Heart right ventricle (tissue), 16 donors: ENCODE measurements at regions of chr11 and their contacts with region 1.

Region 1: DNA sequence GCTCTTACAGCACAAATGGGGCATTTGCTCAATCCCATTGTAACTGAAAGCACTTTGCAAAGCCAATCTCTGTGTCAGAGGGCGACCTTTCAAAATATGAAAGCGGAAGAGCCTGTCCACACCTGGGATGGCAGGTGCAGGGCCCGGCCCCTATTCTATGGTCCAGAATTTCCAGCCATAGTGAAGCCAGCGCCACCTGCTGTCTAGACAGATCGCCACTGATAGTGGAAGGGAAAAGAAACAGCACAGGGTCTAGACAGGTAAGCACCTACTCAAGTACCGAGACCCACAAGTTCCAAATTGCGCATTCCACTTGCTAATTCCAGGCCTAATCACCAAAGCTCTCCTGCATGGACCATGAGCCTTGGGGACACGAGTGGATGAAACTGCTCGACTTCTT is 141.4 kb downstream of the NTM start:
- DNase-seq: no peak
- ATAC-seq: no peak
- H3K4me3 ChIP-seq: no peak overlapping the region
- H3K27ac ChIP-seq: no peak overlapping the region
- H3K4me1 ChIP-seq: no peaks in the 10 kb centered on the region
- H3K27me3 ChIP-seq: peaks cover 0 to 6% (median 0%) of the 10 kb centered on the region in 7 donors
- CTCF ChIP-seq: peak in 8 of 9 donors; percentile 10 to 57 (median 46)

Region 2: GRCh38 chr11:131246663-131247062 is 265.1 kb before region 1 on chr11:
- intact Hi-C with region 1: loop called in 8 of 10 experiments (anchors 5 to 10 kb)
- DNase-seq: peak; percentile 8 to 41
- ATAC-seq: peak in 7 of 8 donors; percentile 28 to 86 (median 56)
- H3K4me3 ChIP-seq: no peak overlapping the region
- H3K27ac ChIP-seq: no peak overlapping the region
- H3K4me1 ChIP-seq: peaks cover 0 to 7% (median 0%) of the 10 kb centered on the region in 9 donors
- H3K27me3 ChIP-seq: peaks cover 0 to 61% (median 37%) of the 10 kb centered on the region in 7 donors
- CTCF ChIP-seq: peak; percentile 30 to 61 (median 52)

Region 3: GRCh38 chr11:131408025-131408640 is 103.7 kb before region 1 on chr11:
- intact Hi-C with region 1: loop called in 2 of 10 experiments (anchors 5 to 10 kb)
- DNase-seq: peak in 1 of 2 donors; percentile 24
- ATAC-seq: peak in 2 of 8 donors; percentile 12 to 68
- H3K4me3 ChIP-seq: no peak overlapping the region
- H3K27ac ChIP-seq: no peak overlapping the region
- H3K4me1 ChIP-seq: no peaks in the 10 kb centered on the region
- H3K27me3 ChIP-seq: peaks cover 0 to 10% (median 0%) of the 10 kb centered on the region in 7 donors
- CTCF ChIP-seq: peak in 7 of 9 donors; percentile 16 to 50 (median 43)

Region 4: GRCh38 chr11:131449036-131450019 is 62.5 kb before region 1 on chr11:
- intact Hi-C with region 1: no loop called
- DNase-seq: no peak
- ATAC-seq: no peak
- H3K4me3 ChIP-seq: no peak overlapping the region
- H3K27ac ChIP-seq: no peak overlapping the region
- H3K4me1 ChIP-seq: peaks cover 0 to 3% (median 0%) of the 10 kb centered on the region in 9 donors
- H3K27me3 ChIP-seq: no peaks in the 10 kb centered on the region
- CTCF ChIP-seq: no peak